ENCODE measurements at regions of chr7 and their contacts with region 1.

Region 1: GRCh38 chr7:117399820-117400422 is 27.4 kb downstream of the ASZ1 start:
- DNase-seq: no peak
- ATAC-seq: peak; percentile 67
- H3K4me3 ChIP-seq: no peak overlapping the region
- H3K27ac ChIP-seq: no peak overlapping the region
- H3K4me1 ChIP-seq: no peaks in the 10 kb centered on the region
- H3K27me3 ChIP-seq: no peaks in the 10 kb centered on the region
- CTCF ChIP-seq: peak; percentile 11 to 63 (median 35); a peak in 3 of 6 replicates
- EP300 ChIP-seq: no peak
- POLR2A ChIP-seq: no peak
- RAD21 ChIP-seq: peak; percentile 71

Region 2: DNA sequence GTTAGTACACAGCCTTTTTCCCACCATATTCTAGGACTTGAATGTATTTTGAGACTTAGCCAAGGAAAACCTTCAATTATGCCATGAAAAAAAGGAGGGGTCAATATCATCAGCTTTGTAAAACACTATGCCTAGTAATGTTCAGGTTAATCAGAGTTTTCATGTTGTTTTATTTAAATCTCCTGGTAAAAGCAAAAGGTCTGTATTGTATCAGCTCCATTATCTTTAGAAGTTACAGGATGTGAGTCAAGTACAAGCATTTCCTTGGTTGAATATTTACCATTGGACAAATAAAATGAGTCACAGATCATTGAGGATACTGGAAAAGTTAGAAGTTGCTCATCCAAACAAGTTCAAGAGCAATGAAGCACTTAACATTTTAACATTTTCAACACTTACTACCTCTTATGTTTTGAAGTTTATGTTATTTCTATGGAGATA is 627.5 kb before region 1 on chr7:
- CTCF ChIA-PET with region 1: no interaction called
- POLR2A ChIA-PET with region 1: no interaction called
- RAD21 ChIA-PET with region 1: no interaction called
- SMC1A ChIA-PET with region 1: no interaction called
- in situ Hi-C with region 1: no loop called
- intact Hi-C with region 1: no loop called
- DNase-seq: no peak
- ATAC-seq: no peak
- H3K4me3 ChIP-seq: no peak overlapping the region
- H3K27ac ChIP-seq: no peak overlapping the region
- H3K4me1 ChIP-seq: no peaks in the 10 kb centered on the region
- H3K27me3 ChIP-seq: peaks cover 0 to 8% of the 10 kb centered on the region in 2 experiments; a peak in 2 of 4 replicates
- CTCF ChIP-seq: no peak
- EP300 ChIP-seq: no peak
- POLR2A ChIP-seq: no peak
- RAD21 ChIP-seq: no peak

Region 3: GRCh38 chr7:117333168-117333567 is 66.8 kb before region 1 on chr7:
- CTCF ChIA-PET with region 1: no interaction called
- POLR2A ChIA-PET with region 1: no interaction called
- RAD21 ChIA-PET with region 1: no interaction called
- SMC1A ChIA-PET with region 1: no interaction called
- in situ Hi-C with region 1: no loop called
- intact Hi-C with region 1: no loop called
- DNase-seq: no peak
- ATAC-seq: no peak
- H3K4me3 ChIP-seq: no peak overlapping the region
- H3K27ac ChIP-seq: no peak overlapping the region
- H3K4me1 ChIP-seq: no peaks in the 10 kb centered on the region
- H3K27me3 ChIP-seq: no peaks in the 10 kb centered on the region
- CTCF ChIP-seq: no peak
- EP300 ChIP-seq: no peak
- POLR2A ChIP-seq: no peak
- RAD21 ChIP-seq: no peak

Region 4: GRCh38 chr7:117411539-117411938 is 11.6 kb after region 1 on chr7:
- CTCF ChIA-PET with region 1: interaction called, 25 read pairs
- POLR2A ChIA-PET with region 1: no interaction called
- RAD21 ChIA-PET with region 1: interaction called, 3 read pairs
- SMC1A ChIA-PET with region 1: interaction called, 23 read pairs
- in situ Hi-C with region 1: no loop called
- intact Hi-C with region 1: no loop called
- DNase-seq: no peak
- ATAC-seq: peak; percentile 93
- H3K4me3 ChIP-seq: no peak overlapping the region
- H3K27ac ChIP-seq: no peak overlapping the region
- H3K4me1 ChIP-seq: no peaks in the 10 kb centered on the region
- H3K27me3 ChIP-seq: no peaks in the 10 kb centered on the region
- CTCF ChIP-seq: no peak
- EP300 ChIP-seq: peak in 1 of 2 experiments; percentile 67; a peak in 1 of 4 replicates
- POLR2A ChIP-seq: no peak
- RAD21 ChIP-seq: no peak

Region 5: GRCh38 chr7:117445206-117445605 is 45.3 kb after region 1 on chr7:
- CTCF ChIA-PET with region 1: interaction called, 3 read pairs
- POLR2A ChIA-PET with region 1: no interaction called
- RAD21 ChIA-PET with region 1: no interaction called
- SMC1A ChIA-PET with region 1: interaction called, 15 read pairs
- in situ Hi-C with region 1: no loop called
- intact Hi-C with region 1: no loop called
- DNase-seq: no peak
- ATAC-seq: no peak
- H3K4me3 ChIP-seq: no peak overlapping the region
- H3K27ac ChIP-seq: no peak overlapping the region
- H3K4me1 ChIP-seq: no peaks in the 10 kb centered on the region
- H3K27me3 ChIP-seq: no peaks in the 10 kb centered on the region
- CTCF ChIP-seq: no peak
- EP300 ChIP-seq: no peak
- POLR2A ChIP-seq: no peak
- RAD21 ChIP-seq: no peak

Region 6: DNA sequence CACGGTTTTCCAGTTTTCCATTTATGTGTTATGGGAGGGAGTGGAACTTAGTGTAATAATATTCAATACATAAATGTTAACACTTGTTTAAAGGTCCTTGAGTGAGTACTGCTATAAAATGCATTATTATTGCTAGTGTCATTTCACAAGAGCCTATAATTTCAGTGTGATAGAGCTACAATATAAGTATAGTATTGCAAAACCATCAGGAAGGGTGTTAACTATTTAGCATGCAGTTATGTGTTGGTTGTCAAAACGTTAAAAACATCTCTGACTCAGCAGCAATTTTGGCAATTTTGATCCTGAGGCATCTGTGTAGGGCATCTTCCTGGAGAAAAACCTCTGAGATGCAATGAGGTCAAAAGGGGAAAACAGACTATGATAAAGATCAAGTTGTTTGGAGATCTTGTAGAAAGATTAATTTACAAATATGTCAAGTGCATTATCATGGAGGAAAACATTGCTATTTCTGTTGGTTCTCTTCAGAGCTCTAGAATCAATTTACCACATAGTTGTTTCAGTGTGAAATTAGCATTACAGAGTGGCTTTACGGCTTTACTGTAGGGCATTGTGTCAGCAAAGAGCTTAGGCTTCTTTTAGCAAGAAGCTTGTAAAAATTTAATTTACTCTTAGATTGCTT is 85.2 kb after region 1 on chr7:
- CTCF ChIA-PET with region 1: interaction called, 14 read pairs
- POLR2A ChIA-PET with region 1: no interaction called
- RAD21 ChIA-PET with region 1: interaction called, 5 read pairs
- SMC1A ChIA-PET with region 1: interaction called, 17 read pairs
- in situ Hi-C with region 1: no loop called
- intact Hi-C with region 1: no loop called
- DNase-seq: no peak
- ATAC-seq: no peak
- H3K4me3 ChIP-seq: no peak overlapping the region
- H3K27ac ChIP-seq: no peak overlapping the region
- H3K4me1 ChIP-seq: no peaks in the 10 kb centered on the region
- H3K27me3 ChIP-seq: peaks cover 0 to 2% of the 10 kb centered on the region in 2 experiments; a peak in 1 of 4 replicates
- CTCF ChIP-seq: no peak
- EP300 ChIP-seq: no peak
- POLR2A ChIP-seq: no peak
- RAD21 ChIP-seq: no peak

Region 7: DNA sequence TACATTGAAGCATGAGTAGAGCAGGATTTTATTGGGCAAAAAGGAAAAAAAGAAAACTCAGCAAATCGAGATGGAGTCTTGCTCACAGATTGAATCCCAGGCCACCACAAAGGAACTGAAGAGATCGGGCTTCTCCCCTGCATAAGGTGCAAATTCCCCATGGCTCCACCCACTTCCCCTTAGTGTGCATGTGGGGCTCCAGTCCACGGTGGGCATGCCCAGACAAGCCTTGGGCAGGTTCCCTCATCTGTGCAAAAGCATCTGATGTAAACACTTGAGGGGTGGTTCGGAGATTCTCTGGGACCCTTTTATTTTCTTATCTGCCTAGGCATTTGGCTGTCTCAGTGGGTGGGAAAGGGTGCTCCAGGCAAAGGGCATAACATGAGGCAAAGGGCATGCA is 230.6 kb after region 1 on chr7:
- CTCF ChIA-PET with region 1: no interaction called
- POLR2A ChIA-PET with region 1: no interaction called
- RAD21 ChIA-PET with region 1: no interaction called
- SMC1A ChIA-PET with region 1: no interaction called
- in situ Hi-C with region 1: no loop called
- intact Hi-C with region 1: no loop called
- DNase-seq: no peak
- ATAC-seq: peak; percentile 50
- H3K4me3 ChIP-seq: no peak overlapping the region
- H3K27ac ChIP-seq: peak overlapping the region; percentile 50
- H3K4me1 ChIP-seq: peaks cover 4% of the 10 kb centered on the region; the same call in 1 of the 2 replicates
- H3K27me3 ChIP-seq: no peaks in the 10 kb centered on the region
- CTCF ChIP-seq: no peak
- EP300 ChIP-seq: no peak
- POLR2A ChIP-seq: no peak
- RAD21 ChIP-seq: no peak

Region 8: DNA sequence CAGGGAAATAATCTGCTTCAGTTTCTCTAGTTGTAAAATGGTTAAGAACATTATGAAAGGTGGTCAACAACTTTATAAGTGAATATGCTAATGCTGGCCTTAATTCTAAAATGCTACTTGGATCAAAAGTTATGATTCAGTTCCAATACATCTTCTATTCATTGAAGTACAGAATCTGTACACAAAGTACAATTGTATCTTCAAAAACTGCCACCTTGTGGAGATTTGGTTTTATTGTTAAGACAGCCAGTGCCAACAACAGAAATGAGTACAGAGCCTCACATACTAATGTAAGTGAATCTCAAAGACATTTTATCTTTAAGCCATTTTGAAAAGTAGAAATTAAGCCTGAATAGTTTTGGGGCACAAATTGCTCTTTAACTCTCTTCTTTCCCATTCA is 273.9 kb after region 1 on chr7:
- CTCF ChIA-PET with region 1: interaction called, 32 read pairs
- POLR2A ChIA-PET with region 1: interaction called, 3 read pairs
- RAD21 ChIA-PET with region 1: interaction called, 22 read pairs
- SMC1A ChIA-PET with region 1: interaction called, 20 read pairs
- in situ Hi-C with region 1: no loop called
- intact Hi-C with region 1: loop called (anchors 1 kb)
- DNase-seq: no peak
- ATAC-seq: peak; percentile 93
- H3K4me3 ChIP-seq: no peak overlapping the region
- H3K27ac ChIP-seq: no peak overlapping the region
- H3K4me1 ChIP-seq: no peaks in the 10 kb centered on the region
- H3K27me3 ChIP-seq: no peaks in the 10 kb centered on the region; a peak in 1 of 4 replicates
- CTCF ChIP-seq: peak; percentile 11 to 51 (median 29); a peak in 4 of 6 replicates
- EP300 ChIP-seq: no peak
- POLR2A ChIP-seq: no peak
- RAD21 ChIP-seq: peak; percentile 53; the same call in 1 of the 2 replicates

Region 9: GRCh38 chr7:117724898-117725297 is 325.0 kb after region 1 on chr7:
- CTCF ChIA-PET with region 1: interaction called, 127 read pairs
- POLR2A ChIA-PET with region 1: no interaction called
- RAD21 ChIA-PET with region 1: interaction called, 4 read pairs
- SMC1A ChIA-PET with region 1: interaction called, 113 read pairs
- in situ Hi-C with region 1: loop called (anchors 5 kb)
- intact Hi-C with region 1: no loop called
- DNase-seq: no peak
- ATAC-seq: peak; percentile 17; the same call in 1 of the 3 replicates
- H3K4me3 ChIP-seq: no peak overlapping the region
- H3K27ac ChIP-seq: no peak overlapping the region
- H3K4me1 ChIP-seq: no peaks in the 10 kb centered on the region
- H3K27me3 ChIP-seq: no peaks in the 10 kb centered on the region
- CTCF ChIP-seq: no peak
- EP300 ChIP-seq: no peak
- POLR2A ChIP-seq: no peak
- RAD21 ChIP-seq: no peak

Measured in GM12878 (cell line).